ENCODE measurements at regions of chr4 and their contacts with region 1.

Region 1: DNA sequence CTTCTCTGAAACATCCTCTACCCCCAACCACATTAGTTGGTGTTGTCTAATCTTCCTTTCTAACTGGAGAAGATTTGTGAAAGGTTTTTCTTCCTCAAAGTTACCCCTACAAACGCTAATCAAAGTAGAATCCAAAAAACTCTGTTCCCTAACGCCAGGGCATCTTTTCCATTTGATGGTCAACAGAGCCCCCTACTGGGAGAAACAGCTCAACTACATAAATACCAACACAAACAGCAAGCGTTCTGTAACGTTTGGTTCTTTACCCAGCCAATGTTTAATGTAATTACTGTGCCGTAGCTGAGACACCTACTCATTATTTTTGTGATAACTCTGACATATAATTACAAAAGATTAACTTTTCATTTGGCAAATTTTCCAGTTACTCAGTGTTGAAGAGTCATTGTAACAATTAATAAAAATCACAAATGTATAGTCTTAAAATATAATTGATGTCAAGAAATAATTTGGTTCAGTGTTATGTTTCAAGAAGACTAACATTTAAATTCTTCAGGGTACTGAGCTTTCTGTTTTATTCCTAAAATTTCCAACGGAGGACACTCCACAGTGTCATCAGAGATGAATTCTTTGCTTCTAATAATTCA is 94.9 kb upstream of the TBC1D9 start:
- DNase-seq: peak; percentile 3
- H3K4me3 Mint-ChIP-seq: no peak overlapping the region
- H3K27ac Mint-ChIP-seq: no peak overlapping the region
- H3K4me1 Mint-ChIP-seq: no peaks in the 10 kb centered on the region
- H3K27me3 Mint-ChIP-seq: peaks cover 2% of the 10 kb centered on the region

Region 2: DNA sequence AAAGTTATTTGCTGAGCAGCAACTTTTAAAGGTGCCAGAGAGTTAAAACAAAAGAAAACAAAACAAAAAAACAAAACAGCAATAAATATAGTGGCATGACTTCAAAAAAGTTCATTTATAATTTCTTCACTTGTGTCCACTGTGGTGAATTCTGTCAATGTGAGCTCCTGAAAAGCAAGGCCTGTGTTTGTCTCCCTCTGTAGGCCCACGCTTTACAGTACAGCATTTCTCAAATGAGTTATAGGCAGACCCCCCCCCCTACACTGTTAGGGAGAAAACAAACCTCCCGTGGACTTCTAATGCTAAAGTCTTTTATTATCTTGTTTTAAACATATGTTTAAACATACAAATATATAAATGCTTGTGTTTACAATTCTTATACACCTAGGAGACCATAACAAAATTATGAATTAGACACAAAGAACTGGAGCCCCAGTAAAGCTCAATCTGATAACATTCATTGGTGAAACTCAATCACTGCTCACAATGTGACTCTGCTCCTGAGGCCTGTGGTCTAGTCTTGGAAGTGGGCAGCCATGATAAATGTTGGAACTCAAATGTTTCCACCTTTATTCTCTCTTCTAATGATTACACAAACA is 524.6 kb before region 1 on chr4:
- intact Hi-C with region 1: loop called (anchors 1 kb)
- DNase-seq: no peak
- H3K4me3 Mint-ChIP-seq: no peak overlapping the region
- H3K27ac Mint-ChIP-seq: no peak overlapping the region
- H3K4me1 Mint-ChIP-seq: peaks cover 12% of the 10 kb centered on the region
- H3K27me3 Mint-ChIP-seq: peaks cover 17% of the 10 kb centered on the region

Region 3: DNA sequence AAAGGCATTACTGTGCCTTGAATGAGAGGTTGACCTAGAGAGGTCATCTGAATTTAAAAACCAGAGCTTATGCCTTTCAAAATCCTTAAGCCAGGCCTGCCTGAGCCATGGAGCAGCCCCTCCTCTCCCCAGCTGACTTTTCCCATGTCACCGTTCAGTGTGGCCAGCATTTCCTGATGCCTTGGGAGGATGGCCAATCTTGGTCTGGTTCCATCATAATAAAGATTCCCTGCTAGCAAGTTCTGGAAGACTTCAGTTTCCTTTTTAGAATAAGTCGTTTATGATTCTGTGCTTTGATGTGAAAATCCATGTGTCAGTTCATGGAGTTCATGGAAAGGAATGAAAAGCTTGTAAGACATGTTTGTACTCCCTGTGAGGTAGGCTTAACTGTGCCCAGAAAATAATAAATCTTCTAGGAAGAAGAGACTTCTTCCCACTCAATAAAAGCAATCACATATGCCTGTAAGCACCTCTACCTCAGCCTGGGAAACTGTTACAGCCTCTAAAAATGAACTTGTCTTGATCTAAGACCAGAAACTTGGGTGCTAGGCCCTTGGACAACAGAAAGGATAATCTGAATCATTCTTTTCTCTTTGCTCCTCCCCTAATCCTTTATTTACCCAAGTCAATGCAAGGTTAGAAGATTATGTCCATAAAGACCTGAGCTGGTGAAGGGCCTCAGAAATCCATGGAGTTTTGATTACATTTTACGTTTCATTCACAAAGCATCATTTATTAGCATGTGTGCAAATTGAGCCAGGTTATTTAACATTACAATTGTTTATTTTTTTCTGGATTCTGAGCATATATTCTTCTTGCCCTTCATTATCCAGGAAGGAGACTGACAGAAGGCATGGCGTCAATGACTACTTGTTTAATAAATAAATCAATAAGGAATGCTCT is 11.0 kb before region 1 on chr4:
- intact Hi-C with region 1: no loop called
- DNase-seq: no peak
- H3K4me3 Mint-ChIP-seq: no peak overlapping the region
- H3K27ac Mint-ChIP-seq: no peak overlapping the region
- H3K4me1 Mint-ChIP-seq: no peaks in the 10 kb centered on the region
- H3K27me3 Mint-ChIP-seq: peaks cover 5% of the 10 kb centered on the region